ENCODE measurements at regions of chr9 and their contacts with region 1.

Region 1: DNA sequence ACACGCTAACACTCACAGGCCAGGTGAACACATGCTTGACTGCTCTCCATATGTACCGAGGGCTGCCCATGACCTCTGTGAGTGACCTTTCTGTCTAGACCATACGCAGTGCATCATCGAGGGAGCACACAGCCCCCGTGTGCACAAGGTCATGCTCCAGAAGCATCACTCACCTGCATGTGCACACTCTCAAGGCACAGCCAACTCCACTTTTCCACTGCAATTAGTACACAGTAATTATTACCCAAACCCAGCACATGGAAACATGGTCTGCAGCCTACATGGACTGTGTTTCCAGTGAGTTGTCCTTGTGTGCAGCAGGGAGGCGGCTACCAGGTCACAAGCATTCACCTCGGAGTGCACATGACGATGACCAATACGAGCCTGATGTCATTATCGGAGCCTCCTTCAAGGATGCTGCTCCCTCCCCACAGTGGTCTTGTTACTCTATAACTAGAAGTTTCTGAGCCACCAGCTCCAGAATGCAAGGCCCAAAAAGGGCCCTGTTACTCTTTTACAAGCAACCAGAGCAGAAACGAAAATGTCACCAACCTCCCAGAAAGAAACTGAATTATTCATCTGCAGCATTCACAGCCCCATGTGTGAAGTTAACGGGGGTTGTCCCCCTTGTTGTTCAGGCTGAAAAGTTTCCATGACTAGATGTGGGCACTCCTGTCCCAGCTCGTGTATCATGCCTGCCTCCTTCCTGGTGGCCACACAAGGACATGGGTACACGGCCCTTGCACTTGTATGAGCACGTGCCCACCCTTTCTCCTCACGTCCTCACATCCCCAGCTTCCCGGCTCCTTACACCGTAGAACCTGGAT is 31.2 kb downstream of the SEMA4D start:
- DNase-seq: peak in 1 of 5 donors; percentile 73
- H3K4me3 ChIP-seq: peak overlapping the region; percentile 5 to 56
- H3K4me3 Mint-ChIP-seq: peak overlapping the region; percentile 78 to 93 (median 84)
- H3K27ac ChIP-seq: peak overlapping the region; percentile 73
- H3K27ac Mint-ChIP-seq: peak overlapping the region; percentile 92 to 100 (median 96)
- H3K4me1 ChIP-seq: peaks cover 100% of the 10 kb centered on the region
- H3K4me1 Mint-ChIP-seq: peaks cover 86 to 100% (median 94%) of the 10 kb centered on the region in 4 donors
- H3K27me3 ChIP-seq: no peaks in the 10 kb centered on the region
- H3K27me3 Mint-ChIP-seq: no peaks in the 10 kb centered on the region

Region 2: DNA sequence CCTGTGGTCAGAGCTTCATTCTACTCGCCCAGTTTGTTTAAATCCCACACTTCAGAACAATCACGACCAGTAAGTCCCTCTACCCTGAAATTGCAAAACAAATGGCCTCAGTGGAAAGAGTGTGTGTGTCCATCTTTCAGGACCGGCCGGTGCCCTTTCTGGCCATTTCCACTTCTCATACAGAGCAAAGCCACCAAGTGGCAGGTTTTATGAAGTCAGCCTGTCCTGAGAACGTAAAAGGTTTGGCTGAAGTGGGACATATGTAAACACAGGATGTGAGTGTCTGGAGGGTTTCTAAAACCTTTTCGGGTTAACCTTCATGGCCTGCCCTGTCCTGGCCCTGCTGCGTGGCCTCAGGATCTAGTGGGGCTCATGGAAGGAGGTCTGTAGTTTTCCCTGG is 907.0 kb before region 1 on chr9:
- CTCF ChIA-PET with region 1: no interaction called
- POLR2A ChIA-PET with region 1: no interaction called
- intact Hi-C with region 1: no loop called
- DNase-seq: no peak
- H3K4me3 ChIP-seq: no peak overlapping the region
- H3K4me3 Mint-ChIP-seq: no peak overlapping the region
- H3K27ac ChIP-seq: no peak overlapping the region
- H3K27ac Mint-ChIP-seq: no peak overlapping the region
- H3K4me1 ChIP-seq: no peaks in the 10 kb centered on the region
- H3K4me1 Mint-ChIP-seq: no peaks in the 10 kb centered on the region
- H3K27me3 ChIP-seq: no peaks in the 10 kb centered on the region
- H3K27me3 Mint-ChIP-seq: peaks cover 8 to 9% of the 10 kb centered on the region in 2 donors

Region 3: DNA sequence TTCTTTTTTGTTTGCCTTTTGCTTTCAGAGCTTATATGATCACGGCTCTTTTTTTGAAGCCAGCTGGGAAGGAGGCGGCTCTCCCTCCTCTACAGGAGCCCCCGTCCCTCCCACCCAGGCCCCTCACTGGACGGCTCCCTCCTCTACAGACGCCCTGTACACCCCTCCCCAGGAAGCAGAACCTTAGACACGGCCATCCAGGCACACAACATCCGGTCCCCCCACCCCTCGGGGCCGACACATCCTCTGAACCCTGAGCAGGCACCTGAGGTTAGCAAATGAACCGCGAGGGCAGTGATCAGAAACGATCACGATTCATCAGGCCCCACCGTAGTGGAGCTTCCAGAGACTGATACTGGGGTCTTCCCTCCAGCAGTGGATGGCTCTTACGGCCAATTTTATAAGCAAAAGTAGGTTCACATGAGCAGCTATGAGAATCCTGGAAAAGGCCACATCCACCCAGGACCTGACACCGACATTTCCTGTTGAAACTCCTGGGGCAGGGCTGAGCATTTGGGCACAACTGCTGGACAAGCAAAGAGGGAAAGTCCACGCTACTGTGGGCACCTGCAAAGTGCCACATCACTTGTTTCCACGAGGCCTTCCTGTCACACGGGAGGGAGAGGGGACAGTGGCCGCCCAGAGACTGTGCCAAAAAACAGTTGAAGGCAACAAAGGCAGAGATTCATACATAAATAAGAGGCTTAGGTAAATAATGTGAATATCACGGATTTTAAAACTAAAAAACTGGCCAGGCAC is 47.6 kb before region 1 on chr9:
- CTCF ChIA-PET with region 1: interaction called, 4 read pairs
- POLR2A ChIA-PET with region 1: interaction called, 18 read pairs
- intact Hi-C with region 1: loop called (anchors 5 kb)
- DNase-seq: peak; percentile 69 to 86 (median 75)
- H3K4me3 ChIP-seq: peak overlapping the region in 1 of 2 donors; percentile 48
- H3K4me3 Mint-ChIP-seq: peak overlapping the region; percentile 81 to 94 (median 84)
- H3K27ac ChIP-seq: peak overlapping the region; percentile 73
- H3K27ac Mint-ChIP-seq: peak overlapping the region; percentile 83 to 97 (median 97)
- H3K4me1 ChIP-seq: peaks cover 100% of the 10 kb centered on the region
- H3K4me1 Mint-ChIP-seq: peaks cover 69 to 99% (median 80%) of the 10 kb centered on the region in 4 donors
- H3K27me3 ChIP-seq: no peaks in the 10 kb centered on the region
- H3K27me3 Mint-ChIP-seq: no peaks in the 10 kb centered on the region

Region 4: GRCh38 chr9:89442981-89443814 is 23.5 kb before region 1 on chr9:
- CTCF ChIA-PET with region 1: interaction called, 3 read pairs
- POLR2A ChIA-PET with region 1: interaction called, 609 read pairs
- intact Hi-C with region 1: no loop called
- DNase-seq: no peak
- H3K4me3 ChIP-seq: no peak overlapping the region
- H3K4me3 Mint-ChIP-seq: peak overlapping the region in 2 of 8 donors; percentile 18 to 46
- H3K27ac ChIP-seq: peak overlapping the region; percentile 50
- H3K27ac Mint-ChIP-seq: peak overlapping the region; percentile 90 to 99 (median 99)
- H3K4me1 ChIP-seq: peaks cover 99% of the 10 kb centered on the region
- H3K4me1 Mint-ChIP-seq: peaks cover 68 to 94% (median 82%) of the 10 kb centered on the region in 4 donors
- H3K27me3 ChIP-seq: no peaks in the 10 kb centered on the region
- H3K27me3 Mint-ChIP-seq: no peaks in the 10 kb centered on the region

Region 5: GRCh38 chr9:89477811-89478630 is 11.4 kb after region 1 on chr9:
- CTCF ChIA-PET with region 1: interaction called, 4 read pairs
- POLR2A ChIA-PET with region 1: interaction called, 609 read pairs
- intact Hi-C with region 1: loop called (anchors 1 kb)
- DNase-seq: peak; percentile 50 to 80 (median 53)
- H3K4me3 ChIP-seq: peak overlapping the region; percentile 52 to 57
- H3K4me3 Mint-ChIP-seq: peak overlapping the region; percentile 77 to 91 (median 86)
- H3K27ac ChIP-seq: peak overlapping the region; percentile 75
- H3K27ac Mint-ChIP-seq: peak overlapping the region; percentile 85 to 97 (median 96)
- H3K4me1 ChIP-seq: peaks cover 88% of the 10 kb centered on the region
- H3K4me1 Mint-ChIP-seq: peaks cover 72 to 94% (median 85%) of the 10 kb centered on the region in 4 donors
- H3K27me3 ChIP-seq: no peaks in the 10 kb centered on the region
- H3K27me3 Mint-ChIP-seq: no peaks in the 10 kb centered on the region

Region 6: GRCh38 chr9:89489548-89490530 is 23.2 kb after region 1 on chr9:
- CTCF ChIA-PET with region 1: interaction called, 3 read pairs
- POLR2A ChIA-PET with region 1: interaction called, 609 read pairs
- intact Hi-C with region 1: no loop called
- DNase-seq: peak; percentile 71 to 86 (median 83)
- H3K4me3 ChIP-seq: peak overlapping the region; percentile 19 to 20
- H3K4me3 Mint-ChIP-seq: peak overlapping the region; percentile 68 to 100 (median 92)
- H3K27ac ChIP-seq: peak overlapping the region; percentile 72
- H3K27ac Mint-ChIP-seq: peak overlapping the region; percentile 74 to 99 (median 88)
- H3K4me1 ChIP-seq: peaks cover 97% of the 10 kb centered on the region
- H3K4me1 Mint-ChIP-seq: peaks cover 87 to 100% (median 93%) of the 10 kb centered on the region in 4 donors
- H3K27me3 ChIP-seq: no peaks in the 10 kb centered on the region
- H3K27me3 Mint-ChIP-seq: no peaks in the 10 kb centered on the region

Region 7: DNA sequence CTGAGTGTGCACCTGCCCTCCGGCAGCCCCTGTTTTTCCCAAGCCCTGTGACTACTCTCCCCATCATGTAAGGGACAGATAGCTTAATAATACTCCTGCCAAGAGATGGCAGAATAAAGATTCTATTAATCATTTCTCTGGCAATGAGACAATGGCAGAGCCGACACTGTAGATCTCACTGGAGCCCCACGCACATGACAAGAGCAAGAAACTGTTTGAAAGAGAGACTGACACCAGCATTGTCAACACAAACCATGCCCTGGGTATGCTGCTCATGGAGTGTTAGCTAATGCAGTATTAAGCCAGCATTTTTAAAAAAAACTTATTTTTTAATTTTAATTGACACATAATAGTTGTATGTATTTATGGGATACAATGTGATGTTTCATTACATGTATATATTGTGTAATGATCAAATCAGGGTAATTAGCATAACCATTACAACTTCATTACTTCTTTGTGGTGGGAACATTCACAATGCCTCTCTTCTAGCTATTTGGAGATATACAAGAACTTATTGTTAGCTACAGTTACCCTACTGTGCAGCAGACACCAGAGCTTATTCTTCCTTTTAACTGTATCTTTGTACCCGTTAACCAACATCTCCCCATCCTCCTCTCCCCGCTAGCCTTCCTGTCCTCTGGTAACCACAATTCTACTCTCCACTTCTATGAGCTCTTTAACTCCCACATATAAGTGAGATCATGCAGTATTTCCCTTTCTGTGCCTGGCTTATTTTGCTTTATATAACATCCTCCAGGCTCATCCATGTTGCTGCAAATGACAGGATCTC is 62.8 kb after region 1 on chr9:
- CTCF ChIA-PET with region 1: no interaction called
- POLR2A ChIA-PET with region 1: interaction called, 47 read pairs
- intact Hi-C with region 1: no loop called
- DNase-seq: peak; percentile 36 to 56 (median 40)
- H3K4me3 ChIP-seq: no peak overlapping the region
- H3K4me3 Mint-ChIP-seq: peak overlapping the region; percentile 15 to 89 (median 66)
- H3K27ac ChIP-seq: no peak overlapping the region
- H3K27ac Mint-ChIP-seq: peak overlapping the region; percentile 39 to 92 (median 76)
- H3K4me1 ChIP-seq: peaks cover 98% of the 10 kb centered on the region
- H3K4me1 Mint-ChIP-seq: peaks cover 74 to 100% (median 91%) of the 10 kb centered on the region in 4 donors
- H3K27me3 ChIP-seq: no peaks in the 10 kb centered on the region
- H3K27me3 Mint-ChIP-seq: no peaks in the 10 kb centered on the region